ENCODE measurements at regions of chr10 and their contacts with region 1.

Region 1: GRCh38 chr10:51001587-51001986 is 72.7 kb upstream of the PRKG1 start:
- DNase-seq: peak in 1 of 2 donors; percentile 65
- H3K4me3 ChIP-seq: no peak overlapping the region
- H3K27ac ChIP-seq: no peak overlapping the region
- H3K4me1 ChIP-seq: peaks cover 0 to 18% (median 2%) of the 10 kb centered on the region in 4 donors
- H3K27me3 ChIP-seq: no peaks in the 10 kb centered on the region
- CTCF ChIP-seq: peak in 4 of 7 experiments; percentile 33 to 48 (median 40)
- EP300 ChIP-seq: no peak
- POLR2A ChIP-seq: no peak

Region 2: GRCh38 chr10:52215745-52216361 is 1214.3 kb after region 1 on chr10:
- intact Hi-C with region 1: loop called (anchors 10 kb)
- DNase-seq: peak; percentile 43 to 91
- H3K4me3 ChIP-seq: no peak overlapping the region
- H3K27ac ChIP-seq: no peak overlapping the region
- H3K4me1 ChIP-seq: peaks cover 0 to 31% (median 6%) of the 10 kb centered on the region in 4 donors
- H3K27me3 ChIP-seq: no peaks in the 10 kb centered on the region
- CTCF ChIP-seq: peak in 5 of 7 experiments; percentile 64 to 80 (median 77)
- EP300 ChIP-seq: no peak
- POLR2A ChIP-seq: no peak

Measured in stomach (tissue), 19 donors.